ENCODE measurements at regions of chr14 and their contacts with region 1.

Region 1: DNA sequence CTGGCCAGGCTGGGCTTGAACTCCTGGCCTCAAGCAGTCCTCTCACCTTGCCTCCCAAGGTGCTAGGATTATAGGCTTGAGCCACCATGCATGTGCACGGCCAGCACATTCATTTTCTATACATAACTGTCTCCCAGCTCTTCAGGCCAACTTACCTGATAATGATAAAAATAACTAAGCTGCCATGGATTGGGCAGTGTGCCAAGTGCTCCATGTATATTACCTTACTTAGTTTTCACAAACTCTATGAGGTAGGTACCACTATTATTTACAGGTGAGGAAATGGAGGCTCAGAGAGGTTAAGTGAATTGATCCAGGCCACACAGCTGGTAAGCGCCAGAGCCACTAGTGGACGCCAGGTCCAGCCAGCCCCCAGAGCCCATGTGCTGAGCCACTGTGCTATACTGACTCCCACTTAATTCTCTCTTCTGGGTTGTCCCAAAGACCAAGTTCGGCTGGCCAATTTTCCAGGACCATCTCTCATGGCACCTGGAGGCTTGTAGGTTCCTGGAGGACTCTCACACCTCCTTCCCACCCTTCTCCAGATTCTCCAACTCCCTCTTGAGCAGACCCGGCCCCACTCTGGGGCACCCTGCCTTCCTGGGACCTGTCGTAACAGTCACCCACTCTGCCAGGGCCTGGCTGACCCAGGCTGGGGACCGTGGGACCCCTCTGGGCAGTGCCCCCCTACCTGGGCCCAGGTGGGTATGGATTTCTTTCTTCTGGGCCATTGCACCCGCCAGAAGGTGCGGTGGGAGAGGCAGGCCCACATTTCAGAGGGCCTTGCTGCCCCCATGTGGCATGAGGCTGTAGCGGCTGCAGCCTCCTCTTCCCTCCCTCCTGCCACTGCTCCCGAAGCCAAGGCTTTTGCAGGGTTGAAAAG is 30.2 kb upstream of the CIPC start:
- DNase-seq: no peak
- H3K4me3 ChIP-seq: no peak overlapping the region
- CTCF ChIP-seq: peak; percentile 97

Region 2: GRCh38 chr14:76882651-76883050 is 185.2 kb before region 1 on chr14:
- CTCF ChIA-PET with region 1: interaction called, 1,065 read pairs
- POLR2A ChIA-PET with region 1: no interaction called
- DNase-seq: no peak
- H3K4me3 ChIP-seq: no peak overlapping the region
- CTCF ChIP-seq: no peak

Region 3: GRCh38 chr14:76904740-76905438 is 163.0 kb before region 1 on chr14:
- CTCF ChIA-PET with region 1: interaction called, 1,142 read pairs
- POLR2A ChIA-PET with region 1: interaction called, 6 read pairs
- DNase-seq: peak; percentile 92
- H3K4me3 ChIP-seq: no peak overlapping the region; the same call in none of the 2 replicates
- CTCF ChIP-seq: no peak

Region 4: DNA sequence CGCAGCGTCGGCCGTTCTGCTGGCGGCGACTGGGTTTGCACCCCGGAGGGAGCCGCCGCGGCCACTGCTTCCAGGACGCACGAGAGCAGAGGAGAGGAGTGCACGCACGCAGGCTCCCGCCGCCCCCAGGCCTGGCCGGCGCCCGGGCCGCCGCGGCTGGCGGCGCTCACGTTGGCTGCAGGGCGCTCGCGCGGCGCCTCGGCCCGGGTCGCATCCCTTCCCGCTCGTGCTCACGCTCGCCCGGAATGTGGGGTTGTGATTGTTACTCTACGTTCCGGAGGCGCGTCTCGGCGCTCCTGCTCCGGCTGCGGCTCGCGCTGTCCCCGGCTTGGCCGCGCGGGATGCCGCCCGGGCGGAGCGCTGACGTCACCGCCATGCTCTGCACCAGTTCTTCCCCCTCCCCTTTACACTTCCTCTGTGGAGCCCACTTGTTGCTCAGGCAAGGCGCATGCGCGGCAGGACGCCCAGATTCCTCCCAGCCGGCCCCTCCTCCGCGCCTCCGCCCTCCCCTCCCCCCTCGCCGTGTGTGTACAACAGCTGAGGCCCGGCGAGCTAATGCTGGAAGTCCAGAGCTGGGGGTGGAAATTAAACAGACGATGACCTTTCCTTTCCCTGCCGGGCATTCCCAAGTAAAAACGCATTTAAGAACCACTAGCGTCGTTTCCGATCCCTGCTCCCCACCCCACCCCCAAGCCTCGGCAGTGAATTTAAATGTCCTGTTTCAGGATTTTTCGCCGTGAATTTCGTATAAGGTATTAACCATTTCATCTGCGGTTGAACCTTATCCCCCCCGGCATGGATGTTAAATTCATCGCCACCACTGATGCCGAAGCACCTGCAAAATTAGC is 39.3 kb before region 1 on chr14 and contains the start of gene IRF2BPL:
- CTCF ChIA-PET with region 1: interaction called, 69 read pairs
- POLR2A ChIA-PET with region 1: interaction called, 4 read pairs
- DNase-seq: peak; percentile 92
- H3K4me3 ChIP-seq: peak within 1 kb of the TSS; percentile 92
- CTCF ChIP-seq: no peak

Region 5: DNA sequence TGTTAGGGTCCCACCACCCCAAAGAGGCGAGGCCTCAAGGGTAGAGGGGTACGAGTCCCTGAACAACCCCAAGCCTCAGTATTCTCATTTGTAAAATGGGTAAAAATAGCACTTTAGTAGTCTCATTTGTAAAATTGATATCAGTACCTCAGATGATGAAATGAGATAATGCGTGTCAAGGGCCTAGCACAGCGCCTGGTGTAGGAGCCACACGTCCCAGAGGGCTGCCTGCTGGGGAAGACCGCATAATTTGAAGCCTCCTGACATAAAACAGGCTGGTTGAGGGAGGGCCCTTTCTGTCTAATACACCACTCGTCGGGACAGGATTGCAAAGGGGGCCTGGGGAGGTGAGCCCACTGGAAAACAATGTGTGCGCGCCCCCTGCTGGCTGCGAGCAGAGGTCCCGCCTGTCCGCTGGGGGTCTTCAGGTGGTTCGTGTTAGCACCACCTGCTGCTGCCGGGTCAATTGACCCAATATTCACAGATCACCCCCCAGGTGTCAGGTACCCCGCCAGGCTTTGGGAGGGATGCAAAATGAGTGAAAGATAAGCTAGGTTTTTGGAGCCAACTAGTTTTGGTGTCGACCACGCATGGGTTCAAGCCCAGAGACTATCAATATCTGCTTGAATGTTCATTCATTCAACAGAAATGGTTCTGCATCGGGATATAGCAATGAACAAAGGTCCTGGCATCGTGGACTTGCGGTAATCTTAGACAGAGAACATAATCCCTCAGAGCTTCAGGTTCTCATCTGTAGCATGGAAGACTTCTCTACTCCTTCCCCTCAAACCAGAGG is 14.6 kb before region 1 on chr14:
- CTCF ChIA-PET with region 1: interaction called, 76 read pairs
- POLR2A ChIA-PET with region 1: no interaction called
- DNase-seq: no peak
- H3K4me3 ChIP-seq: no peak overlapping the region
- CTCF ChIP-seq: peak; percentile 92